ENCODE measurements at regions of chr13 and their contacts with region 1.

Region 1: DNA sequence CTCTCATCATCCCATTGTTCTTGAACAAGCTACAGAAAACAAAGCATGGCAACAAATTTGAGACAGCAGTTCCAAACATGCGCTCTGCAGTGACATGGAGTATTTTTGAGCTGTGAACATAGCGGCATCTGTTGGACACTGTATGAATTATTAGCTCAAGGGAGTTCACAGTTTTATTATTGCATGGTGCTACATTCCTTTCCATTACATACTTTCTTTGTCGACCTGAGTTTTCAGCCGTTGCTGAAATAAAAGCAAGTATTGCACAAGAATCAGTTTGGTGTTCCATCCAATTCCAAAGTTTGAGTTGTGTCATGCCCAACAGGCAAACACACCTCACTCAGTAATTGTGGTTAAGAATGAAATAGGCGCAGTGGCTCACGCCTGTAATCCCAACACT is 30.1 kb upstream of the METTL21C start:
- DNase-seq: no peak
- H3K4me3 Mint-ChIP-seq: no peak overlapping the region
- H3K27ac Mint-ChIP-seq: no peak overlapping the region
- H3K4me1 Mint-ChIP-seq: peaks cover 6% of the 10 kb centered on the region
- H3K27me3 Mint-ChIP-seq: peaks cover 15% of the 10 kb centered on the region

Region 2: DNA sequence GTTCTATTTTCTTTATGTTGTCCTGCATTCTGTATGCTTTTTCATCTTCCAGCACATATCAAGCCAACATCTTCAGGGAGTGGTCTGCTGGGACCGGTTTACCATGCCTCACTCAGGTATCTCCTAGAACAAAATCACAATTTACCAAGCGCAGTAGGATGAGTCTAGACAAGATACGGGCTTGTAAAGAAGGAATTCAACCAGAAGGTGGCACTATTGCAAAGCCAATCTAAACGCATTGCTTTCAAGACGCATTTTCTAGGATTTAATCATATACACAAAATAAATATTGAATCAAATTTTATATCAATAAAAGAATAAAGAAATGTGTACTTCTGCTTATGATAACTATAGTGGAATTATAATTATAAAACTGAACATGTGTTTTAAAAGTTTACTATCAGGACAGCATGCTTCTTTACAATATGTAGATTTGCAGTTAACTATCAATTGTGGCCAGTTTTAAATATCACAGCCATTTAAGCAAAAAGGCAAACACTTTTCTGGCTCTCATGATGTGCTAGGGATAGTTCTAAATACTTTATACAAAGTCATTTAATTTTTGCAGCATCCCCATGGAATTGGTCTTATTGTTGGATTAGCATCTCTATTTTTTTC is 144.3 kb before region 1 on chr13:
- CTCF ChIA-PET with region 1: interaction called, 20 read pairs
- POLR2A ChIA-PET with region 1: no interaction called
- DNase-seq: peak; percentile 24
- H3K4me3 Mint-ChIP-seq: no peak overlapping the region
- H3K27ac Mint-ChIP-seq: no peak overlapping the region
- H3K4me1 Mint-ChIP-seq: peaks cover 17% of the 10 kb centered on the region
- H3K27me3 Mint-ChIP-seq: peaks cover 11% of the 10 kb centered on the region